ENCODE measurements at regions of chr1 and their contacts with region 1.

Region 1: DNA sequence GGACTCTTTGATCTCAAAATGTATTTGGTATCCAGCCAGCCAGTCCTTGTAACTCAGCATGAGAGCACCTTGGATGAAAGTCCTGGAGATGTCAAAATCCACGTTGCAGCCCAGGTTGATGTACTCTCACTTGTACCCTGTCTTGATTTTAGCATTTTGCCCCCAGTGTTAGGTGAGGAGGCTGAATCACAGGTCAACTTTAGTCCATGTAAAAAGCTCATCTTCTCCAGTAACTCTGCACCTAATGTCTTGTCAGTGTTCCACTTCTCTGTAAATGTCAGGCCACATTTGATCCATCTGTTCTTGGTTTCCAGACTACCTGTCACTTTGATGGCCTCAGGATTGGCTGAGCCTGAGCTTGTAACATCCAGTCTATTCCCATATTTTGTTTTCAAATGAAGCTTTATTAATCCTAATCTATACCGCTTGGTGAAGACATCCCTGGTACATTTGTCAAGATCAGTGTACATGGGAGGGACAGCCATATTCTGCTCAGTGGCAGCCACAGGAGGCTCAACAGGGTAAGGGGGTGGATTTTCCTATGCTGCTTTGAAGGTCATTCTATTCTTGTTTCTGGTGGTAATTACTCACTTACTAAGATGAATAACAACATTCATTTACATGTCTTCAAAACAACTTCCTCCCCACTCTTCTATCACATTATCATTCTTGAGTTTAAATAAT is 24.1 kb upstream of the FCRL3 start:
- DNase-seq: no peak
- H3K4me3 ChIP-seq: no peak overlapping the region
- H3K27ac ChIP-seq: no peak overlapping the region
- H3K4me1 ChIP-seq: no peaks in the 10 kb centered on the region
- H3K27me3 ChIP-seq: no peaks in the 10 kb centered on the region
- CTCF ChIP-seq: no peak
- EP300 ChIP-seq: no peak
- POLR2A ChIP-seq: no peak

Region 2: GRCh38 chr1:158248118-158248517 is 523.4 kb after region 1 on chr1:
- in situ Hi-C with region 1: no loop called
- intact Hi-C with region 1: loop called (anchors 5 kb)
- DNase-seq: peak; percentile 39
- H3K4me3 ChIP-seq: no peak overlapping the region
- H3K27ac ChIP-seq: no peak overlapping the region
- H3K4me1 ChIP-seq: no peaks in the 10 kb centered on the region
- H3K27me3 ChIP-seq: no peaks in the 10 kb centered on the region
- CTCF ChIP-seq: no peak
- EP300 ChIP-seq: no peak
- POLR2A ChIP-seq: no peak

Region 3: GRCh38 chr1:158873141-158873540 is 1148.5 kb after region 1 on chr1:
- in situ Hi-C with region 1: no loop called
- intact Hi-C with region 1: no loop called
- DNase-seq: no peak
- H3K4me3 ChIP-seq: no peak overlapping the region
- H3K27ac ChIP-seq: no peak overlapping the region
- H3K4me1 ChIP-seq: no peaks in the 10 kb centered on the region
- H3K27me3 ChIP-seq: no peaks in the 10 kb centered on the region
- CTCF ChIP-seq: no peak
- EP300 ChIP-seq: no peak
- POLR2A ChIP-seq: no peak